ENCODE measurements at regions of chr4 and their contacts with region 1.

Region 1: DNA sequence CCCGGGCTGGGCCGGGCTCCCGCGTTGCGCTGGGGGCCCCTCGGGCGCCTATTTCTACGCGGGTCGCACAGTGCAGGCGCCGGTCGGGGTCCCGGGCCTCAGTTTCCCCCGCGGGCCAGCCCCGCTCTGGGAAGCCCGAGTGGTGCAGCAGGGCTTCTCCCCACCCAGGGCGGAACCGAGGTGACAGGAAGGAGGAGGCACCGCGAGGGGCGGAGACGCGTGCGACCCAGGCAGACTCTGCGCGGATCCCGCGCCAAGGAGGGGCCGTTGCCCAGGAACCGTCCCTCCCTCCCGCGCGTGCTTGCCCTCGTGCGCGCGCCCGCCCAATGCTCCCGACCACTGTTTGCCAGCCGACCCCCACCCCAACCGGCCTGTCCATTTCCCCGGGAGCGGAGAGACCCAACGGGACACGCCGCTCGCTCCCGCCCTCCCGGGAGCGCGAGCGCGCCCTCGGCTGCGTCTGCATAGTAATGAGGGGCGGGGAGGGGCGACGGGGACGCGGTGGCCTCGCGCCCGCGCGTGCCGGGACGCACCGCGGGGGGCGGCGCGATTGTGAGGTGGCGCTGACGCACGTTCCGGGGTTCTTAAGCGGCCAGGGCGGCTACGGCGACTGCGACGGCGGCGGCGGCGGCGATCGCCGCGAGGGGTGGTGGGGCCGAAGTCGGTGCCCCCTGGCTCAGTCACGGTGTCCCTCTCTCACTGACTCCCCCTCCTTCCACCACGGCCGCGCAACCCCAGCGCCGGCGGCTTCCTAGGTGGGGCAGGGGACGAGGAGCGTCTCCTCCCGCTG is at the start of gene CPEB2:
- DNase-seq: peak; percentile 93
- H3K4me3 Mint-ChIP-seq: peak within 1 kb of the TSS; percentile 87
- H3K27ac Mint-ChIP-seq: peak within 1 kb of the TSS; percentile 94
- H3K4me1 Mint-ChIP-seq: peaks cover 16% of the 10 kb centered on the region
- H3K27me3 Mint-ChIP-seq: no peaks in the 10 kb centered on the region
- total RNA-seq, gene CPEB2: 9.5 to 9.8 TPM

Region 2: DNA sequence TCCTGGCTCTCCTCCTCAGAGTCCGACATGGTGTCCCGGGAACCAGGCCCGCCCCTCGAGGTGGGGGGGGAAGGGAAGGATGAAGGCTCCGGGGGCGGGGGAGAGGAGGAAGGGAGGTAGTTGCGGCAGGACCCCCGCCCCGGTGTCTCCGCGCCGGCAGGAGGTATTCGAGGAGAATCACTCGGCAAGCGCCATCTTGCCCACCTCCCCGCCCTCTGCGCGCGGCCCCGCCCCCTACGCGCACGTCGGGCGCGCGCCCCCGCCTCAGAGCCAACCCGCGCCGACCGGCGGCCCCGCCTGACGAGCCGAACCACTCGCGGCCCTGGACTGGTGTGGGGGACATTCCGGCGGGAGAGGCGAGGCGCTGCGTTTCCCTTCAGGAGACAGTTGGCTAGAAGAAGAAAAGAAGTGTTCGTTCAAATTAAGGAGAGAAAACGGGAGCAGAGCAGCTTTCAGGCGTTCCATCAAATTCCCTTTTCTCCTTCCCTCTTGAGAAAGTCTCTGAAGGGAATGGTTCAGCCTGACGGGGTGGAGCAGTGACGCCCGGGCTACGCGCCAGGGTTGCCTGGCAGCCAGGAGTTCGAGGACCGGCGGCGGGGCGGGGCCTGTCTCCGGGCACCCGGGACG is 1517.8 kb before region 1 on chr4 and contains the start of gene RAB28:
- CTCF ChIA-PET with region 1: no interaction called
- POLR2A ChIA-PET with region 1: no interaction called
- intact Hi-C with region 1: loop called (anchors 5 kb)
- DNase-seq: peak; percentile 94
- H3K4me3 Mint-ChIP-seq: peak within 1 kb of the TSS; percentile 84
- H3K27ac Mint-ChIP-seq: peak within 1 kb of the TSS; percentile 96
- H3K4me1 Mint-ChIP-seq: peaks cover 22% of the 10 kb centered on the region
- H3K27me3 Mint-ChIP-seq: peaks cover 13% of the 10 kb centered on the region
- total RNA-seq, gene RAB28: 16.5 to 18.8 TPM

Region 3: GRCh38 chr4:14783011-14783877 is 218.8 kb before region 1 on chr4:
- CTCF ChIA-PET with region 1: no interaction called
- POLR2A ChIA-PET with region 1: no interaction called
- intact Hi-C with region 1: loop called (anchors 1 kb)
- DNase-seq: peak; percentile 82
- H3K4me3 Mint-ChIP-seq: no peak overlapping the region
- H3K27ac Mint-ChIP-seq: peak overlapping the region; percentile 77
- H3K4me1 Mint-ChIP-seq: peaks cover 22% of the 10 kb centered on the region
- H3K27me3 Mint-ChIP-seq: peaks cover 7% of the 10 kb centered on the region

Region 4: DNA sequence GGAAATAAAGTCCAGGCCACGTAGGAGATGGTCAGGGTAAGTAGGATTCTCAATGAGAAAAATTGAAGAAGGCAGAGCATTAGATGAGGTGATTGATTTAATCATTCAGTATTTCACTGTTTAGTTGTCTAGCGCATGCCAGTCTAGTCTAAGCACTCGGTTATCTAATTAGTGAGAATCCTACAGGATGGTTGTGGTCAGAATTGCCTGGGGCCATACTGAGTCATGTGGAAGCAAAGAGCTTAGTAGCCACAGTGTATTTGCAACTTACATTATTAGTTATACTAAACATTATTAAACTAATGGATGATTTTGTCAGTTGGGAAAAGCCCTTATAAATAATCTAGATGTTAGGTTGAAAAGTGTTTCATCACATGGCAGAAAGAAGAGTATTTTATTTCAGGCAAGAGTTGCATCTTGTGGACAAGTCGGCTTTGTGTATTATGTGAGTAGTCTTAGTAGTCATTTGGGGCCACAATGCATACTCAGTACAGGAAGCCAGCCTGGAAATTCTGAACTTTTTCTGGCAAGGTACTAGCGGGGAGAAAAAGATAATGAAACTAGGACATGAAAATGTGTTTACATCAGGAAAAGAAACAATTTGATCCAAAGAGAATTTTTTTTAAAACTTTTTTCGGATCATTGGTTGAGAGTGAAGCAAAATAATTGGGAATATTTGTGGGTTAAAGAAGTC is 32.2 kb after region 1 on chr4:
- CTCF ChIA-PET with region 1: no interaction called
- POLR2A ChIA-PET with region 1: no interaction called
- intact Hi-C with region 1: loop called (anchors 1 kb)
- DNase-seq: no peak
- H3K4me3 Mint-ChIP-seq: no peak overlapping the region
- H3K27ac Mint-ChIP-seq: no peak overlapping the region
- H3K4me1 Mint-ChIP-seq: peaks cover 28% of the 10 kb centered on the region
- H3K27me3 Mint-ChIP-seq: no peaks in the 10 kb centered on the region

Region 5: DNA sequence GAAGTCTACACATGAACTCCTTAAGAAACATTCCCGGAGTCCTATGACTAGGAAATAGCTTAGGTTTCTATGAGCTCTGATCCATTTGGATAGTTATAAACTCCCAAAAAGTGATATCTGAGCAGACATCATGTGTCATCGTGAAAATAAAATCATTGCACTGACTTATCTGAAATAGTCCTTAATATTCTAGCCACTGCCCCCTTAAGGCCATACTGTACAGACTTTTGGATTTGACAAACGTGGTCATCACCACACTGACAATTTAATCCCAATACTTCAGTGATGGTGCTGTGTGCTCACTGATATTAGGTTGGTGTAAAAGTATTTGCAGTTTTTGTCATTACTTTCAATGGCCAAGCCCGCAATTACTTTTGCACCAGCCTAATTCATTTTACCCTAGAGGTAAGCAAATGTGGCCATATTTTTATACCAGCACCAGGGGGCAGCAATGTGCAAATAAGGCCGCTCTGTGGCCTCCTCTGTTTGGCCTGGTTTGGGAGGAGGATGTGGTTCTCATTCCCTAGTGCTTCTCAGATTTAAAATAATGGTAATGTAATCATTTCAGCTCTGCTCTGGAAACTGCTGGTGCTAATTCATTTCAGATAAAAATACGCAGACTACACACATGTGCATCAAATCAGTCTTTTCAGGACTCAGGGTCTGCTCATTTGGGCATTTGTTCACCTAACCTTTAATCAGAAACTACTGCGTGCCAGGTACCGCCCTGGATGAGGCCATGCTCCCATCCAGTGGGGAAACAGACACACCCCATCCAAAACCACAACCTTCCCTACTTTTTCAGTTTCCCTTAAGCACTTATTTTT is 229.4 kb after region 1 on chr4:
- CTCF ChIA-PET with region 1: no interaction called
- POLR2A ChIA-PET with region 1: no interaction called
- intact Hi-C with region 1: loop called (anchors 5 kb)
- DNase-seq: peak; percentile 81
- H3K4me3 Mint-ChIP-seq: no peak overlapping the region
- H3K27ac Mint-ChIP-seq: no peak overlapping the region
- H3K4me1 Mint-ChIP-seq: peaks cover 28% of the 10 kb centered on the region
- H3K27me3 Mint-ChIP-seq: no peaks in the 10 kb centered on the region

Region 6: GRCh38 chr4:15681207-15682015 is 679.3 kb after region 1 on chr4 and contains the start of gene FAM200B:
- CTCF ChIA-PET with region 1: no interaction called
- POLR2A ChIA-PET with region 1: no interaction called
- intact Hi-C with region 1: loop called (anchors 1 kb)
- DNase-seq: peak; percentile 99
- H3K4me3 Mint-ChIP-seq: peak within 1 kb of the TSS; percentile 99
- H3K27ac Mint-ChIP-seq: peak within 1 kb of the TSS; percentile 95
- H3K4me1 Mint-ChIP-seq: peaks cover 29% of the 10 kb centered on the region
- H3K27me3 Mint-ChIP-seq: no peaks in the 10 kb centered on the region
- total RNA-seq, gene FAM200B: 8.3 to 8.9 TPM

Region 7: GRCh38 chr4:15976456-15977447 is 974.7 kb after region 1 on chr4:
- CTCF ChIA-PET with region 1: no interaction called
- POLR2A ChIA-PET with region 1: no interaction called
- intact Hi-C with region 1: no loop called
- DNase-seq: no peak
- H3K4me3 Mint-ChIP-seq: no peak overlapping the region
- H3K27ac Mint-ChIP-seq: no peak overlapping the region
- H3K4me1 Mint-ChIP-seq: no peaks in the 10 kb centered on the region
- H3K27me3 Mint-ChIP-seq: peaks cover 5% of the 10 kb centered on the region

Measured in activated CD4-positive, alpha-beta memory T cell treated with anti-CD3 and anti-CD28 coated beads for 36 hours (primary cell).